ENCODE measurements at regions of chr19 and their contacts with region 1.

Region 1: GRCh38 chr19:5823579-5824281 is 15.8 kb downstream of the FUT6 start:
- DNase-seq: peak; percentile 67
- H3K4me3 ChIP-seq: no peak overlapping the region
- H3K27ac ChIP-seq: no peak overlapping the region
- H3K4me1 ChIP-seq: peaks cover 10% of the 10 kb centered on the region
- H3K27me3 ChIP-seq: no peaks in the 10 kb centered on the region
- CTCF ChIP-seq: no peak

Region 2: DNA sequence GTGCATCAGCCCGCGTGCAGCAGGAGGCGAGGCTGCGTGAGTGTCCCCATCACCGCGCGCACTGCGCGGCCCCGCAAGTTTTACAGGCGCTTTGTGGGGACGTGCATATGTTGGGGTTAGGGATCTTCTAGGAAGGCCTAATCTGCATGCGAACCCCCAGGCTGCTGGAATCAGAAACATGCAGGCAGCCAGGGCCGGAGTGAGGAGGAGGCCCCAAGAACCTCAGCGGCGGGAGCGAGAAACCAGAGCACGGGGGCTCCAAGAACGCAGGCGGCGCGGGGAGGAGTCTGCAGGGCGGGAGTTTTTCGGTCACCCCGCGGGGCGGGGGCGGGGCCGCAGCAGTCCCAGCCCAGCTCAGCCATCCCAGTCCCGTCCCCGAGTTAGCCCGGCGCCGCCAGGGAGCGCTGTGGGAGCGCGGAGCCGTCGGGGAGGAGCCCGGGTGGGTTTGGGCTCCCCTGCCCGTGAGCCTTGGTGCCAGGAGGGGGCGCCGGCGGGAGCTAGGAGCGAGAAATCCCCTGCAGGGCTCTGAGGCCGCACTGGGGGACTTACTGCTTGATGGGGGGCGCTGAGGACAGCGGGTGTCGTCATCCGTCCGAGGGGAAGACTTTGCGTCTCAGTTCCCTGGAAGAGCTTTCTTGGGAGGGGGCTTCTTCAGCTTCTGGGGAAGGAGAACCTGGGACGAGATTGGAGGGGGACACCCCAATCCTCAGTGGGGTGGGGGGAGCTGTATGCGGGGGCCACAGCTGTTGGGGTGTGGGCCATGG is 19.8 kb before region 1 on chr19:
- intact Hi-C with region 1: no loop called
- DNase-seq: peak; percentile 94
- H3K4me3 ChIP-seq: peak overlapping the region; percentile 32
- H3K27ac ChIP-seq: no peak overlapping the region
- H3K4me1 ChIP-seq: peaks cover 4% of the 10 kb centered on the region
- H3K27me3 ChIP-seq: no peaks in the 10 kb centered on the region
- CTCF ChIP-seq: peak; percentile 86

Region 3: DNA sequence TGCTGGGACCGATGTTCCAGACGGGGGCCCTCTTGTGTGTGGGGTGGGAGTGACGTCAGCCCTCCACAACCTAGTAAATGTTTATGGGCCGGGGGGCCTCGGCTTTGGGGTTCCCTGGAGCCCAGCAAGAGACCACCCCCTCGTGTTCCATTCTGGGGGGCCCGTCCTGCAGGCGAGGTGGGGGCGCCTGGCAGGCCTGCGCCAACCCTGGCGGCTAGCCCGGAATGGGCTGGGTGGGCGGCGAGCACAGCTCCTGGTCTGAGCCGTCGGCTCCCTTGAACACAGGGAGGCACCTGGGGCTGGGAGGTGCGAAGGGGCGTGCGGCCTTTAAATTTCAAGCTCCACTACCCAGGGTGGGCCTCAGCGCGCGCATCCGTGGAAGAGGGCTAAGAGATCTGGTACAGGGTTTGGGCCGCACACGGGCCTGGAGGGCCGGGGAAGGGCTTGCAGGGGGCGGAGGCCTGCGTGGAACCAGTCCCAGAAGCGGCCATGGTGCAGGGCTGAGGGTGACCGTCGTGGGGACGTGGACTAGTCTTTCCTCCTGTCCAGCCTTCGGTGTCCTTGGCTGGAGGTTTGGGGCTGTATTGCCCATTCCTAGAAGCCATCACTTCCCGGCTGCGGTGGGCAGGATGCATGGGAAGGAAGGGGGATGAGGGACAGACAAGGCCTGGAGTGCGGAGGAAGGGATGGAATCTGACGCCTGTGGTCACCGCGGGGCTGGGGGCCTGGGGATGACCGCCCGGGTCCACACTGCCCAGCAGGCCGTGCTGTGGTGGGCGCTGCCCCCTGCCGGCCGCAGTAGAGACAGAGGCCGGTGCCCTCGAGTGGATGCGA is 68.4 kb after region 1 on chr19:
- intact Hi-C with region 1: loop called (anchors 5 kb)
- DNase-seq: peak; percentile 48
- H3K4me3 ChIP-seq: no peak overlapping the region
- H3K27ac ChIP-seq: no peak overlapping the region
- H3K4me1 ChIP-seq: no peaks in the 10 kb centered on the region
- H3K27me3 ChIP-seq: peaks cover 5% of the 10 kb centered on the region
- CTCF ChIP-seq: peak; percentile 60

Region 4: GRCh38 chr19:6048808-6049405 is 225.2 kb after region 1 on chr19:
- intact Hi-C with region 1: no loop called
- DNase-seq: peak; percentile 87
- H3K4me3 ChIP-seq: no peak overlapping the region
- H3K27ac ChIP-seq: no peak overlapping the region
- H3K4me1 ChIP-seq: no peaks in the 10 kb centered on the region
- H3K27me3 ChIP-seq: no peaks in the 10 kb centered on the region
- CTCF ChIP-seq: peak; percentile 85

Measured in colonic mucosa (tissue), 4 donors.